ENCODE measurements at regions of chr11 and their contacts with region 1.

Region 1: GRCh38 chr11:86360775-86361395 is 13.8 kb upstream of the CCDC81 start:
- DNase-seq: peak; percentile 23
- ATAC-seq: peak; percentile 71
- H3K4me3 ChIP-seq: no peak overlapping the region
- H3K27ac ChIP-seq: no peak overlapping the region
- H3K4me1 ChIP-seq: no peaks in the 10 kb centered on the region
- H3K27me3 ChIP-seq: no peaks in the 10 kb centered on the region
- CTCF ChIP-seq: peak; percentile 8 to 57 (median 50); a peak in 4 of 6 replicates
- POLR2A ChIP-seq: no peak
- RAD21 ChIP-seq: peak; percentile 71

Region 2: GRCh38 chr11:86418917-86419316 is 58.0 kb after region 1 on chr11:
- CTCF ChIA-PET with region 1: interaction called, 16 read pairs
- POLR2A ChIA-PET with region 1: no interaction called
- RAD21 ChIA-PET with region 1: no interaction called
- intact Hi-C with region 1: no loop called
- DNase-seq: no peak
- ATAC-seq: peak; percentile 73
- H3K4me3 ChIP-seq: no peak overlapping the region
- H3K27ac ChIP-seq: no peak overlapping the region
- H3K4me1 ChIP-seq: no peaks in the 10 kb centered on the region
- H3K27me3 ChIP-seq: no peaks in the 10 kb centered on the region
- CTCF ChIP-seq: peak in 1 of 3 experiments; percentile 41; a peak in 2 of 6 replicates
- POLR2A ChIP-seq: no peak
- RAD21 ChIP-seq: peak; percentile 53; the same call in 1 of the 2 replicates

Region 3: GRCh38 chr11:86818466-86819192 is 457.7 kb after region 1 on chr11:
- CTCF ChIA-PET with region 1: no interaction called
- POLR2A ChIA-PET with region 1: no interaction called
- RAD21 ChIA-PET with region 1: no interaction called
- intact Hi-C with region 1: loop called (anchors 2 kb)
- DNase-seq: peak; percentile 52
- ATAC-seq: peak; percentile 65
- H3K4me3 ChIP-seq: no peak overlapping the region
- H3K27ac ChIP-seq: no peak overlapping the region
- H3K4me1 ChIP-seq: peaks cover 0 to 11% of the 10 kb centered on the region in 2 experiments; a peak in 2 of 4 replicates
- H3K27me3 ChIP-seq: no peaks in the 10 kb centered on the region; the same call in 1 of the 2 replicates
- CTCF ChIP-seq: peak; percentile 51 to 93 (median 83)
- POLR2A ChIP-seq: no peak
- RAD21 ChIP-seq: peak; percentile 97